Calu3 (cell line): ENCODE measurements at regions of chr2 and their contacts with region 1.

Region 1: DNA sequence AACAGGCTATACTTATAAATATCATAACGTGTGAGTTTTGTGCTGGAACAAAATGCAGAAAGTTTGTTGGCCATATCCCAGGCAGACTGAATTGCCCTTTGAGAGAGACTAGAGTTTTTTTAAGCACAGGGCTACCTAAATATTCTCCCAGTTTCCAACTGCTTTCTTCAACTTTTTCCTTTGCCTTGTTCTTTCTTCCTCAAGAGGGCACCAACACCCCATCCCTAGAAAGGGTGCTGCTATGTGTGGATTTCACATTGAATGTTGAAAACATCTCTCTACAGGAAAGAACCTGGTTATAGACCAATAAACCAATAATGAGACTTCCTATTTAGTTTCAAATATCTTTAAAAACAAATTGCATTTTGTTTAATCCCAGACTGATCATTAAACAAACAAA is 87.9 kb downstream of the ICOS start:
- DNase-seq: peak; percentile 44
- H3K4me3 Mint-ChIP-seq: no peak overlapping the region
- H3K27ac Mint-ChIP-seq: no peak overlapping the region
- H3K4me1 Mint-ChIP-seq: peaks cover 3% of the 10 kb centered on the region
- H3K27me3 Mint-ChIP-seq: peaks cover 17% of the 10 kb centered on the region
- CTCF ChIP-seq: peak; percentile 24

Region 2: DNA sequence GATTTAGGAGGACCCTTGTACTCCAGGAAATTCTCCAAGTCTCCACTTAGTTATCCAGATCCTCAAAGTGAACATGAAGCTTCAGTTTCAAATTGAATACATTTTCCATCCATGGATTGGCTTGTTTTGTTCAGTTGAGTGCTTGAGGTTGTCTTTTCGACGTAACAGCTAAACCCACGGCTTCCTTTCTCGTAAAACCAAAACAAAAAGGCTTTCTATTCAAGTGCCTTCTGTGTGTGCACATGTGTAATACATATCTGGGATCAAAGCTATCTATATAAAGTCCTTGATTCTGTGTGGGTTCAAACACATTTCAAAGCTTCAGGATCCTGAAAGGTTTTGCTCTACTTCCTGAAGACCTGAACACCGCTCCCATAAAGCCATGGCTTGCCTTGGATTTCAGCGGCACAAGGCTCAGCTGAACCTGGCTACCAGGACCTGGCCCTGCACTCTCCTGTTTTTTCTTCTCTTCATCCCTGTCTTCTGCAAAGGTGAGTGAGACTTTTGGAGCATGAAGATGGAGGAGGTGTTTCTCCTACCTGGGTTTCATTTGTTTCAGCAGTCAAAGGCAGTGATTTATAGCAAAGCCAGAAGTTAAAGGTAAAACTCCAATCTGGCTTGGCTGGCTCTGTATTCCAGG is 156.8 kb before region 1 on chr2 and contains the start of gene CTLA4:
- CTCF ChIA-PET with region 1: no interaction called
- intact Hi-C with region 1: no loop called
- DNase-seq: no peak
- H3K4me3 Mint-ChIP-seq: no peak within 1 kb of the TSS
- H3K27ac Mint-ChIP-seq: no peak within 1 kb of the TSS
- H3K4me1 Mint-ChIP-seq: no peaks in the 10 kb centered on the region
- H3K27me3 Mint-ChIP-seq: peaks cover 61% of the 10 kb centered on the region
- CTCF ChIP-seq: no peak
- total RNA-seq, gene CTLA4: not detected in 2 replicates

Region 3: DNA sequence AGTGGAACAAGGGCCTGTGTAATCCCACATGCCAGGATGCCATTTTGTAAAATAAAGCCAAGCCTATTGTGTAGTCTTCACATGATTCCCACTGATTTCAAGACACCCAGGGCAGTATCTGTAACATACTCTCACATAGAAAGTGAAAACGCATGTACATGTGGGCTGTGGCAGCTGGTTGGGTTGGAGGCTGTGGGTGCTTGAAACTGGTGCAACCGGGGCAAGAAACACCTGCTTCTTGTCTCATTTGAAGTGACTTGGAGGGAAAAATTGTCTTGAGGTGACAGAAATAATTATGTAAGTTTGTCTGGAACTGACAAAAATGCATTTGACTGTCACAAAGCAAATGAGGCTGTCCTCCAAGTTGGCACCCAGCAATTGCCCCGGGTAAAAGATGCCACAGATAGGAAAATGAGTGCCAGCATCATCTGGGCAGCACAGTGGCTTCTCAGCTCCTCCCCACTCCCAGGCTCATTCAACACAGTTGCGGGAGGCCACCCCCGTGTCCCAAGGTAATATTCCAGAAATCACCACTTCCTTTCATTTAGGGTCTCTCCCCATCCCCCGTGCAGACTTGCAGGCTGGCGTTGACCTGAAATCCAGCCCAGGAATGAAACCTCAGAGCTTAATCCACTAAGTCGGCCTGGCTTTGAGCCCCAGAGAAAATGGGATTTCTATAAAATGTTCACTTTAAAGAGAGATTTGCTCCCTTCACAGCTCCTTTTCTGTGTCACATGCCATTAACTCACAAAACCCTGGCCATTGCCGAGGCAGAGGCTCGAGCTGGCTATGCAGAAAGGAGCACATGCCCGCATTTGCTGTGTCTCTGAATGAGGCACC is 226.9 kb after region 1 on chr2:
- CTCF ChIA-PET with region 1: no interaction called
- intact Hi-C with region 1: loop called (anchors 10 kb)
- DNase-seq: no peak
- H3K4me3 Mint-ChIP-seq: no peak overlapping the region
- H3K27ac Mint-ChIP-seq: no peak overlapping the region
- H3K4me1 Mint-ChIP-seq: peaks cover 8% of the 10 kb centered on the region
- H3K27me3 Mint-ChIP-seq: no peaks in the 10 kb centered on the region
- CTCF ChIP-seq: no peak